Activated CD4-positive, alpha-beta T cell treated with anti-CD3 and anti-CD28 coated beads for 36 hours (primary cell): ENCODE measurements at regions of chr7 and their contacts with region 1.

Region 1: DNA sequence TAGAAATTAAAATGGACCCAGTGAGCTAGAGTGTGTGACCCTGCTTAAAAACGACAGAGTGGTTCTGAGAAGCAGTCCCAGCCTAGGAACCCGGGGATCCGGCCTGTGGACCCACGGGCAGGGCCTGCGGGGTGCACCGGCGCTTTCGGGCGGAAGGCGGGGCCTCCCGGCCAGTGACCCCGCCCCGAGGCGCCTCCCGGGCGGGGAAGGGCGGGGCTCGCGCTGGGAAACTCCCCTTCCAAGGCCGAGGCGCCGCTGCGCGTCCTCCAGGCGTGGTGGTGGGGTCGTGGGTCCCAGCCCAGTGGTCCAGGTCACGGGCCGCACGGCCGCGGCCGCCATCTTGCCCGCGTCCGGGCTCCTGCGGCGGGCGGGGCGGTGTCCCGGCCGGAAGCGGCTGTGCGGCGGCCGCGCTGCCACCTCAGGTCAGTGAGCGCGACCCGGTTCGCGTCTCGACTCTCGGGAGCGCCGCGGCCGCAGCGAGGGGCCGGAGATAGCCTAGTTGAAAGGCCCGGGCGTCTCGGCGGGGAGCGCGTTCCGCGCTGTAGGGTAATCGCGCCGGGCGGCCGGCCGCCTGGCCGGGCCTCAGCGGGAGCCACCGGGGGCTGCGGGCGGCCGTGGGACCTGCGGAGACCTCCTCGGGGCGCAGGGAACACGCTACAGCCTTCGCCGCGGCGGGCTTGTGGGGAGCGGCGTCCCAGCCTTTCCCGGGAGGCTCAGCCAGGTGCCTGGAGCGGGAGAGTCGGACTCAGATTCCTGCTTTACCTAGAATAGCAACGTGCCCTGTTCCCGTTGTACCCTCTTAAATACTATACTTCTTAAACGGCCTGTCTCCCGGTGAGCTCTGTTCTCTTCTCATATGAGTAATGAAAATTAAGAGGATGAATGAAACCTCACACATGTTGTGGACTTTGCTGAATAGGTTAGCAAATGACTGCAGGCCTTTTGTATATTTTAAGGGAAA is at the start of gene MIOS:
- DNase-seq: peak; percentile 89
- ATAC-seq: peak; percentile 90
- H3K4me3 Mint-ChIP-seq: peak within 1 kb of the TSS; percentile 83
- H3K27ac Mint-ChIP-seq: peak within 1 kb of the TSS; percentile 90
- H3K4me1 Mint-ChIP-seq: peaks cover 29% of the 10 kb centered on the region
- H3K27me3 Mint-ChIP-seq: no peaks in the 10 kb centered on the region
- total RNA-seq, gene MIOS: 41.7 to 45.7 TPM

Region 2: DNA sequence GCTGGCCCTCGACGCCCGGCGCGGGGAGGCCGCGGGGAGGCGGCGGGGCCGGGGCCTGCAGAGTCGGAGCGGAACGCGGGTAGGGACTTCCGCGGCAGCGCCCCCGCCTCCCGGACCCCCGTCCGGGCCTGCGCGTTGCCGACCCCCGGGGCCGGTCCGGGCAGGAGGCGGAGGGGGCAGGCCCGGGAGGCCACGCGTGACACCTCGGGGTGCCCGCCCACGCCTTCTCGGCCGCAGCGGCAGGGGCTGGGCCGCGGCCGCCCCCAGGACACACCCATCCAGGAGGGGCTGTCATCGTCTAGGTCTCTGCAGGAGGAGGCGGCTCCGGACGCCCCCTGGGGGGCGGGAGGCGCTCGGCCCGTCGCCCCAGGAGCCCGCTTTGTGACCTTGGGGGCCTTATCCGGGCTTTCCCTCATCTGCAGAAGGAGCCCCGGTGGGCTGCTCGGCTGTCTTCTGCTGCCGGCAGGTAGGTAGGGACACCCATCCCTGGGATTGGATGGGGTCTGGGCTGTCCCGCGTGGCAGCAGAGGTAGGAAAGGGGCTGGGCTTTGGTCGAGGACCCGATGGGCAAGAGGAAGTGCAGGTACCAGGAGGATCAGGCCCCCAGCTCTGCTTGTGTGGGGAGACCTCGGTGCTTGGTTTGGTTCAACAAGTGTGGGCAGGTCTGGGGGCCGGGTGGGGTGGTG is 929.2 kb before region 1 on chr7:
- CTCF ChIA-PET with region 1: no interaction called
- POLR2A ChIA-PET with region 1: no interaction called
- intact Hi-C with region 1: loop called in 1 of 2 experiments (anchors 10 kb)
- DNase-seq: peak; percentile 67
- ATAC-seq: peak; percentile 62
- H3K4me3 Mint-ChIP-seq: peak overlapping the region; percentile 81
- H3K27ac Mint-ChIP-seq: peak overlapping the region; percentile 84
- H3K4me1 Mint-ChIP-seq: peaks cover 26% of the 10 kb centered on the region
- H3K27me3 Mint-ChIP-seq: no peaks in the 10 kb centered on the region

Region 3: DNA sequence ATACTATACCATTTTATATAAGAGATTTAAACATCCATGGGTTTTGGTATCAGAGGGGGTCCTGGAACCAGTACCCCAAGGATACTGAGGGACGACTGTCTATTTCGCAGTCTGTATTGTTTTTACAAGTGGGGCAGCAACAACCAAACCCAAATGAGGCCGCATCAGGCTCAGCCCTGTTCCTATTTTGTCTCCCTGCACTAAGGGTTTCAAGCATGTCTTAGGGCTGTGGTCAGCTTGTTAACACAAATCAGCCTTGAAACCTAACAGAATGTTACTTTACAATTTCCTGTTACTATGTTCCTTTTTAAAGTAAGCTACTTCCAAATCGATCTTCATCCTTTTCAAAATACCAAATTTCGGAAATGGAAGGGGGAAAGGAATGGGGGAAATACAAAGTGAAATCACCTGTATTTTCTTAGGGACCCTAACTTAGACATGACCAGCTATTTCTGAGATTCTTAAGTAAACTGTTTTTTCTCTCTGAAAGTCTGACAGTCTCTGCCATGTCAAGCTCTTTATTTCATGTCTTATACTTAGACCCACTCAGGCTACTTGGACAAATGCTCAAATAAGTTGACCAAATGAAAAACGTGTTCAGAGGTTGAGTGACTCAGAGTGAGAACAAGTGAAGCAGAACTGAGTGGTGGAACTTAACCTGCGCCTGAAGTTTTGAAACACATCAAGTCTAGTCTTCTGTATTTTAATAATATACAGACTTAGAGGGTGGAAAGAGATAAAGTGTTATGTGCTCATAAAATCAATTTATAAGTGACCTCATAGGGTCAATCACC is 308.8 kb before region 1 on chr7:
- CTCF ChIA-PET with region 1: no interaction called
- POLR2A ChIA-PET with region 1: no interaction called
- intact Hi-C with region 1: loop called in 1 of 2 experiments (anchors 5 kb)
- DNase-seq: no peak
- ATAC-seq: peak; percentile 67
- H3K4me3 Mint-ChIP-seq: peak overlapping the region; percentile 33
- H3K27ac Mint-ChIP-seq: peak overlapping the region; percentile 72
- H3K4me1 Mint-ChIP-seq: peaks cover 33% of the 10 kb centered on the region
- H3K27me3 Mint-ChIP-seq: no peaks in the 10 kb centered on the region

Region 4: GRCh38 chr7:7595451-7595850 is 28.5 kb after region 1 on chr7:
- CTCF ChIA-PET with region 1: no interaction called
- POLR2A ChIA-PET with region 1: no interaction called
- intact Hi-C with region 1: no loop called
- DNase-seq: no peak
- ATAC-seq: no peak
- H3K4me3 Mint-ChIP-seq: no peak overlapping the region
- H3K27ac Mint-ChIP-seq: no peak overlapping the region
- H3K4me1 Mint-ChIP-seq: no peaks in the 10 kb centered on the region
- H3K27me3 Mint-ChIP-seq: no peaks in the 10 kb centered on the region

Region 5: GRCh38 chr7:8125680-8126444 is 558.9 kb after region 1 on chr7:
- CTCF ChIA-PET with region 1: no interaction called
- POLR2A ChIA-PET with region 1: no interaction called
- intact Hi-C with region 1: loop called in 1 of 2 experiments (anchors 5 kb)
- DNase-seq: peak; percentile 88
- ATAC-seq: peak; percentile 93
- H3K4me3 Mint-ChIP-seq: peak overlapping the region; percentile 62
- H3K27ac Mint-ChIP-seq: peak overlapping the region; percentile 95
- H3K4me1 Mint-ChIP-seq: peaks cover 81% of the 10 kb centered on the region
- H3K27me3 Mint-ChIP-seq: peaks cover 5% of the 10 kb centered on the region

Region 6: DNA sequence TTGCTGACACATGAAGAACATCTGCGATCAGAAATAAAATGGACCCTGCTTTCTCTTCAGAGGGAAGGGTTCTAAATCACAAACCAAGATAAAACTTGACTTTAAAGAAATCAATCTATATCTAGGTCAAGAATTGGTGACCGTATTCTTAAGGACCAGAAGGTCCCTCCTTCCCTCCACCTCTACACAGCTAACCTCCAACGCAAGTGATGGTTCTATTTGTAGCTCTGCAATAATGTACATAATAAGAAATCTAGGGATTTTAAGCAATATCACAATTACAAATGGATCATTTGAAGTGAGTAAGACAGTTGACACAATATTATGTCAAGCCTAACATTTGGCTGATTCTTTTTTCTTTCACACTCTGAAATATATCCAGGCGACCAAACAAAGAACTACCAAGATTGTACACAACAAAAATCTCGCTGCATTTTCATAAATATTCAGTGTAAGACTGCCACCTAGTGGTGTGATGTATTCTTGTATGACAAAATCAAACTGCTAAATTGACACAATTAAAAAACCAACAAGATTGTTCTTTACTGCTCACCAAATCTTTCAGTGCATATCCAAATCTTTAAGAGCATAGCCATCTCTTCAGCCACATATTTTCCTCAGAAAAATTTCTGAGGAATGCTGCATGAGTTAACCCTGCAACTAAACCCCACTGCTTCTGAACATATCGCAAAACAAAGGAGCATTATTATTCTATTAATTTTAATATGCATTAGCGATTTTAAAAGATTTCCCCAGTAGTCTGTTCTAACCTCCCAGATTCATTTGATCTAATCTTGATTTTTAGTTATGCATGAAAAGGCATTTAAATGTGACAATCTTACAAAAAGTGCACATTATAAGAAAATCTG is 650.5 kb after region 1 on chr7:
- CTCF ChIA-PET with region 1: no interaction called
- POLR2A ChIA-PET with region 1: no interaction called
- intact Hi-C with region 1: loop called in 1 of 2 experiments (anchors 10 kb)
- DNase-seq: no peak
- ATAC-seq: peak; percentile 49
- H3K4me3 Mint-ChIP-seq: no peak overlapping the region
- H3K27ac Mint-ChIP-seq: no peak overlapping the region
- H3K4me1 Mint-ChIP-seq: peaks cover 2% of the 10 kb centered on the region
- H3K27me3 Mint-ChIP-seq: no peaks in the 10 kb centered on the region